Left cardiac atrium (tissue), 4 donors: ENCODE measurements at regions of chr12 and their contacts with region 1.

Region 1: GRCh38 chr12:89162704-89163261 is 189.5 kb downstream of the DUSP6 start:
- DNase-seq: peak; percentile 69
- ATAC-seq: peak; percentile 78 to 89

Region 2: DNA sequence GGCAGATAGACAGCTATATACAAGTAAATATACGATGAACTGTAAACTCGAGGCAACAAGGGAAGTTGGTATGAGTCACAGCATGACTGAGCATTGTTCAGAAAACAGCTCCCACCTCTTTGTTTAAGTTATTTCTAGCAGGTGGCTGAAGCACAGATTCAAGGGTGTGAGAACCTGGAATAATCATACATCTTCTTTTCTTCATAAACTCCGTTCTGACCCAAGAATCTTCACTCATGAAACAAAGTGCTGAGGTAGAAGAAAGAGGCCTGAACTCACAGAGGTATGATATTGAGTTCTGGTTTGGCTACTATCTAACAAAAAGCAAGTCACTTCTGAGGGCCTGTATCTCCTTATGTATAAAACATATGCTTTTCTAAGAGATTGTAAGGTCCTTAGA is 218.4 kb before region 1 on chr12:
- intact Hi-C with region 1: no loop called
- DNase-seq: no peak
- ATAC-seq: no peak

Region 3: DNA sequence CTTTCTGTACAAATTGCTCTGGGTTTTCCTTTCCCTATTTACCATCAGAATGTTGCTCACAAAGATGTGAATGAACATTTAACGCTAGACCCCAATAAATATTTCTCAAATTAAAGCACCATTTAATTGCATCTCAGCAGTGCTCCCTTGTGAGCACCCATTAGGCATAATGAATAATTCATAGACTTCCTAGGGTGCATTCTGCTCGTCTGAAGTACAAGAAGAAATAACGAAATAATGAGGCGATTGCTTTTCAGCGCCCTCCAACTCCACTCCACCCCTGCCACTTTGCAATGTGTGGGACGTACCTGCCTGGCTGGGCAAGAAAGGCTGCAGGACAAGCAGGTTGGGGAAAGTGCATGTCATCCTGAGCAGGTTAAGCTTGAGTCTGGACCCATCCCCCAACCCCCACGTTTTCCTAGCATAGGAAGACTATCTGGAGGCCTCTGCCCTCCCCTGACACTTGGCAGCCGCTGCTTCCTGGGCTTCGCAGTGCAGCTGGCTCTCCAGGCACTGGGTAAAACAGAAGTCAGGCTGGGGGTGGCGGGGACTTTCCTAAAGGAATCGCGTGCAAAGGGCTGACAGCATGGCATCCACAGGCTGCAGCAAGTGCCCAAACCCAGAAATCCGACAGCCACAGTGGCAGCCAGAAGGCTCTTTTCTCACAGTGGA is 64.2 kb before region 1 on chr12:
- intact Hi-C with region 1: no loop called
- DNase-seq: no peak
- ATAC-seq: peak; percentile 44 to 70

Region 4: GRCh38 chr12:89252284-89252683 is 89.5 kb after region 1 on chr12:
- intact Hi-C with region 1: no loop called
- DNase-seq: no peak
- ATAC-seq: peak; percentile 56 to 62

Region 5: GRCh38 chr12:89328246-89329030 is 165.7 kb after region 1 on chr12:
- intact Hi-C with region 1: no loop called
- DNase-seq: no peak
- ATAC-seq: peak; percentile 40 to 62

Region 6: GRCh38 chr12:89345830-89346740 is 183.3 kb after region 1 on chr12:
- intact Hi-C with region 1: loop called in 1 of 2 experiments (anchors 10 kb)
- DNase-seq: peak; percentile 48
- ATAC-seq: peak; percentile 60 to 69